ENCODE measurements at regions of chr2 and their contacts with region 1.

Region 1: GRCh38 chr2:202109737-202110184 is 36.7 kb downstream of the KIAA2012 start:
- DNase-seq: peak in 1 of 2 experiments; percentile 13
- H3K4me3 ChIP-seq: no peak overlapping the region
- H3K27ac ChIP-seq: no peak overlapping the region
- H3K4me1 ChIP-seq: peaks cover 0 to 11% (median 4%) of the 10 kb centered on the region in 4 experiments; a peak in 5 of 7 replicates
- H3K27me3 ChIP-seq: no peaks in the 10 kb centered on the region
- CTCF ChIP-seq: peak; percentile 33 to 47 (median 35)
- EP300 ChIP-seq: no peak
- POLR2A ChIP-seq: no peak
- RAD21 ChIP-seq: peak; percentile 37 to 55

Region 2: GRCh38 chr2:201904538-201905420 is 205.0 kb before region 1 on chr2:
- CTCF ChIA-PET with region 1: no interaction called
- POLR2A ChIA-PET with region 1: no interaction called
- DNase-seq: no peak
- H3K4me3 ChIP-seq: no peak overlapping the region
- H3K27ac ChIP-seq: no peak overlapping the region
- H3K4me1 ChIP-seq: peaks cover 9 to 21% (median 14%) of the 10 kb centered on the region in 4 experiments; a peak in 4 of 7 replicates
- H3K27me3 ChIP-seq: no peaks in the 10 kb centered on the region
- CTCF ChIP-seq: no peak
- EP300 ChIP-seq: no peak
- POLR2A ChIP-seq: no peak
- RAD21 ChIP-seq: no peak

Region 3: DNA sequence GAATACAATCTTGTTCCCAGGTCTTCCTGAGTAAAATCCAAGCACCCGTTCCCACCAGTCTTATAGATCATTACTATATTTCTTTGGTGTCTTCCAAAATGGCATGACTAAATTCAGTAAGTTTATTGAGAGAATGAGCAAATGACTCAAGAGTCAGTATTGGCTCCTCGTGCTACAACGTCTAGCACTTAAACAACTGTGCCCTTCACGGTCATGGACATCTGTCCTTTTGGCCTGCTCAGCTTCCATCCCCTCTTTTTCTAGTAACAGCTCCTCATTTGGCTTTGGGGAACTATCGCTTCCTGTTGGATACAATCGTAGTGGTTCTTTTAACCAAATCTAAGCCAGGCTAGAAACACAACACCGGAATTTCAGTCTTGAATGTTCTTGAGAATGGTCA is 100.2 kb before region 1 on chr2:
- CTCF ChIA-PET with region 1: no interaction called
- POLR2A ChIA-PET with region 1: no interaction called
- DNase-seq: no peak
- H3K4me3 ChIP-seq: no peak overlapping the region
- H3K27ac ChIP-seq: no peak overlapping the region
- H3K4me1 ChIP-seq: peaks cover 0 to 4% (median 0%) of the 10 kb centered on the region in 4 experiments; a peak in 3 of 7 replicates
- H3K27me3 ChIP-seq: no peaks in the 10 kb centered on the region
- CTCF ChIP-seq: no peak
- EP300 ChIP-seq: no peak
- POLR2A ChIP-seq: no peak
- RAD21 ChIP-seq: no peak

Region 4: DNA sequence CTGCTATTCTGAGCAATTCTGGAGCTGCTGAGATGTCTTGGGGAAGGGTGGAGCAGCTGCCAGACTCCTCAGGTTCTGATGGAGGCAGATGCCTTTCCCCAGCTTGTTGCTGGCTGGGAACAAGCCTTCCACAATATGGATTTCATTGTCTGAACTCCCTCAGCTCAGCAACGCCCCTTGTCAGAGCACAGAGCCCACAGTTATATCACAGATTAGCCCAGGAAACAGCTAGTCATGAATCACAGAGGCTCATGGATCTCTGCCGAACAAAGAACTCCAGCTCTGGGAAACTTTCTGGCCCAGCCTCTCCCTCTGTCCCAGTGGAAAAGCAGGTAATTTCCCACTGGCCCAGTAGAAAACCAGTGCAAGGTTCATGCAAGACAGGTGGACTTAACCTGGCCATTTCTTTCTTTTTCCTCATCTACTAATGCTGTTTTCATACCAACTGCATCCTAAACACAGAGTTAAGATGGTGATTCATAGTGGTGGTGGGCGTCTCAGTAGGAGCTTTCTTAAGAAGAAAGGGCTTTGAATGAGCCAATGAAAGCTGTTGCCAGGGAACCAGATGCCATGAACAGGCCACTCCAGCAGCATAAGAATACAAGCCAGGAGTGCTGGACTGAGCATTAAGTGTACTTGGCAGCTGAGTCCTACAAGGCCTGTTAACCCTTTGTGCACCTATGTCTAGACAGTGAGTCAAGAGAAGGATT is 45.4 kb before region 1 on chr2:
- CTCF ChIA-PET with region 1: no interaction called
- POLR2A ChIA-PET with region 1: no interaction called
- DNase-seq: no peak
- H3K4me3 ChIP-seq: peak overlapping the region in 1 of 4 experiments; percentile 7; a peak in 1 of 8 replicates
- H3K27ac ChIP-seq: peak overlapping the region; percentile 41
- H3K4me1 ChIP-seq: peaks cover 0 to 18% (median 14%) of the 10 kb centered on the region in 4 experiments; a peak in 3 of 7 replicates
- H3K27me3 ChIP-seq: no peaks in the 10 kb centered on the region
- CTCF ChIP-seq: no peak
- EP300 ChIP-seq: no peak
- POLR2A ChIP-seq: no peak
- RAD21 ChIP-seq: no peak

Region 5: DNA sequence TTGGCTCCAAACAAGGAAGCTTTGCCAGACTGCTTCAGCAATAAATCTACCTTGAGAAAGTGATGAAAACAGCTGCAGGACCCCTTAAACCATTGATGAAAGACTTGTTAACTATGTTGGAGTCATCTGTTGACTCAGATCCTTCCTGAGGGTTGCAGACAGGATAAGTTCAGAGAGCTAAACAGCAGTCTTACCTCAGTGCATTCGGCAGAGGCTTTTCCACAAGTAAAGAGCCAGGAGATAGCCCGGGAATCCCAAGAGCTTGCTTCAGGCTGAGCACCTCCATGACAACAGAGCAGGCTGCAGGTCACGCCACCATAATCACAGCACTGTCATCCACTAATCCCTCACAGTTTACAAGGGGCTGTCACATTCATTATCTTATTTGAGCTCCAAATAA is 13.0 kb before region 1 on chr2:
- CTCF ChIA-PET with region 1: interaction called, 16 read pairs
- POLR2A ChIA-PET with region 1: interaction called, 3 read pairs
- DNase-seq: no peak
- H3K4me3 ChIP-seq: no peak overlapping the region
- H3K27ac ChIP-seq: no peak overlapping the region
- H3K4me1 ChIP-seq: peaks cover 0 to 9% (median 6%) of the 10 kb centered on the region in 4 experiments; a peak in 3 of 7 replicates
- H3K27me3 ChIP-seq: no peaks in the 10 kb centered on the region
- CTCF ChIP-seq: no peak
- EP300 ChIP-seq: no peak
- POLR2A ChIP-seq: no peak
- RAD21 ChIP-seq: no peak

Region 6: DNA sequence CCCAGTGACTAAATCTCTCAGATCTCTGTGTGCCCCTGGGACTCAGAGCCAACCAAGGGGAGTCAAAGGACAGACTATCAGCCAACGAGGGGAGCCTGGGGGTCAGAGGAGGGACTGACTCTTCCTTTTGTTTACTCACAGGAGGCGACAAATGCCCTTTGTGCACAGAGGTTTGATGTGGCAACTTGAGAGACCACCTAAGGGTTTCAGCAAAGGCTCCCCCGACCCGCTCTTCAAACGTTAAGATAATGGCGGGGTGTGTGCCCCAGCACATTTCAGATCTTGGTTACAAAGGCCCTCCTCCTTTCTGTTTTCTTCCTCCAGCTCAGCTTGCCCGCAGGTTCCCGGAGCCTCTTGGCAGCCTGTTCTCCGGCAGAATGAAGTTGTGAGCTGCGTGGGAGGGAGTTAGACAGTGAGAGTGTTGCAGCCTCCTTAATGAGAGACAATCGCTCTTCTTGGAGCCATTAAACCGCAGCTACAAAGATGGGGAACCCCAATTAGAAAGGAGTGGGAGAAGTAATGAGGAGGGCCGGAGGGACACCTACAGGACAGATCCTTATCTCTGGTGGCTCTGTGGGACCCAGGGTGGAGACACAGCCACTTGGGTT is 39.5 kb after region 1 on chr2:
- CTCF ChIA-PET with region 1: interaction called, 11 read pairs
- POLR2A ChIA-PET with region 1: no interaction called
- DNase-seq: peak in 1 of 2 experiments; percentile 68
- H3K4me3 ChIP-seq: peak overlapping the region in 2 of 4 experiments; percentile 6 to 20; a peak in 2 of 8 replicates
- H3K27ac ChIP-seq: no peak overlapping the region
- H3K4me1 ChIP-seq: peaks cover 5 to 21% (median 11%) of the 10 kb centered on the region in 4 experiments; a peak in 5 of 7 replicates
- H3K27me3 ChIP-seq: peaks cover 0 to 2% (median 0%) of the 10 kb centered on the region in 4 experiments; a peak in 1 of 7 replicates
- CTCF ChIP-seq: peak; percentile 9 to 27 (median 25); a peak in 3 of 4 replicates
- EP300 ChIP-seq: no peak
- POLR2A ChIP-seq: no peak
- RAD21 ChIP-seq: peak; percentile 36 to 53

Measured in H1 (cell line).